CD4-positive, alpha-beta T cell (primary cell): ENCODE measurements at regions of chr2 and their contacts with region 1.

Region 1: GRCh38 chr2:196277002-196277401 is 105.6 kb upstream of the STK17B start:
- DNase-seq: peak in 7 of 14 experiments; percentile 9 to 79 (median 46)
- ATAC-seq: peak; percentile 59
- H3K4me3 ChIP-seq: no peak overlapping the region
- H3K4me3 Mint-ChIP-seq: peak overlapping the region; percentile 11
- H3K27ac ChIP-seq: no peak overlapping the region
- H3K27ac Mint-ChIP-seq: peak overlapping the region; percentile 79
- H3K4me1 ChIP-seq: peaks cover 25% of the 10 kb centered on the region
- H3K4me1 Mint-ChIP-seq: peaks cover 70% of the 10 kb centered on the region
- H3K27me3 ChIP-seq: no peaks in the 10 kb centered on the region
- H3K27me3 Mint-ChIP-seq: no peaks in the 10 kb centered on the region
- CTCF ChIP-seq: peak; percentile 81

Region 2: DNA sequence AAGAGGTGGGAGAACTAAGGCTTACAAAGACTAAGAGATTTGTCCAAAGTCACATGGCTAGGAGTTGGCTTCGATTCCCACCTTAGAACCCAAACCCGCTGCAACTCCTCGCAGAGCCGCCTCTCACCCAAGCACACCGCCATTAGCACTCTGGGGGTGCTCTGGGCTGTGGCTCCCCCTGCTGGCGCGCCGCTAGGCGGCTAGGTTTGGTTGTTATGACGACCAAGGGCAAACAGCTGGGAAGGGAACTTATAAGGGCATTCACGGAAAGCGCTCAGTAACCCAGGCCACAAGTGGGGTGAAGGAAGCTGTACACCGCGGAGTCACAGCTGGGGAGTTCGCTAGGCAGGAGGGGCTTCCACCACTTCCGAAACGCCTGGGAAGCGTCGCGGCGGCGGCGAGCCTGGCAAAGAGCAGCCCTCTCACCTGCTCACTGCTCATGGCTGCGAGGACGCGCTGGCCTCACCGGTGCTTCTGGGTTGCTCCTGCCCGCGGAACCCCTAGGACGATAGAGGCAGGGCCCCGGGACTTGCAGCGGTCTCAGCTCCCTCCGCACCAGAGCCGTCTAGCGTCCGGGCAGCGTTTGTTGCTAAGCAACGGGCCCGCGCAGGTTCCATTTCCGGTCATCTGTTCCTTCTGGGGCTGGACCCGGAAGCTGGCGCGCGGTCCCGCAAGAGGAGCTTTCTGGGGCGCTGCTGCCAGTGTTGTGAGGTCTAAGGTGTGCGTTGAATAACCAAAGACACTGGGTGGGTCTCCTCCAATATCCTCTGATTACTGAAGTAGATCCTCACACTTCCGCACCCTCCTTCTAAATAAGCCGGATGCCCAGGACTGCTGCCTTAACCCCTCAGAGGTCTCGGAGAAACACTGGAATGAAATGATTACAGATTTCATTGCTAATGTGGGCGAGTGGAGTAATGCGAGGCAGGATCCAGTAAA is 208.5 kb before region 1 on chr2 and contains the start of gene DNAH7:
- CTCF ChIA-PET with region 1: interaction called, 18 read pairs
- POLR2A ChIA-PET with region 1: interaction called, 4 read pairs
- intact Hi-C with region 1: no loop called
- DNase-seq: peak; percentile 81 to 97 (median 91)
- ATAC-seq: peak; percentile 96
- H3K4me3 ChIP-seq: peak within 1 kb of the TSS; percentile 69
- H3K4me3 Mint-ChIP-seq: peak within 1 kb of the TSS; percentile 86
- H3K27ac ChIP-seq: peak within 1 kb of the TSS in 1 of 2 donors; percentile 40
- H3K27ac Mint-ChIP-seq: peak within 1 kb of the TSS; percentile 47
- H3K4me1 ChIP-seq: peaks cover 13% of the 10 kb centered on the region
- H3K4me1 Mint-ChIP-seq: peaks cover 19% of the 10 kb centered on the region
- H3K27me3 ChIP-seq: no peaks in the 10 kb centered on the region
- H3K27me3 Mint-ChIP-seq: peaks cover under 1% of the 10 kb centered on the region
- CTCF ChIP-seq: peak; percentile 94
- total RNA-seq, gene DNAH7: not detected

Region 3: DNA sequence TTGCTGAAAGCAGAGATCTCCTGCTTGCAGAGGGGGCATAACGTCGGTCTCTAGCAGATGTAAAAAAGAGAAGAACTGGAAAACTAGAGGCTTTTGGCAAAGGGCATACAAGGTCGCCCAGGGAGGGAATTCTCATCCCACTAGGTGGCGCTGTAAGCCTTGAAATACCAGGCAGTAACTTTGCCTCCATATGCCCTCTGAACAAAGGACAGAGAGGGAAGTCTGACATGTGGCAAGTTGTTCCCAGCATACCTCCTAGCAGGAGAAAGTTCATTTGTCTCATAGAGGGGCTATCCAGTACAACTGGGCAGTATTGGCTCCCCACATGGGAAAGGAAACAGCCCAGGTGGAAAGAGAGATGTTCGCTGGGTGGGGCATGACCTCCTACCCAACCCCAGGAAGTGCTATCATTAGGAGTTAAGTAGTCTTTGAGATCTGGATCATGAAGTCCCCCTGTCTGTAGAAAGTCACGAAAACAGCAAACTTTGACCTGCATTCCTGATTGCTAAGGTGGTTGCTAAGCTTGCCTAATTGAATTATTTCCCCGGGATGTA is 145.5 kb before region 1 on chr2:
- CTCF ChIA-PET with region 1: interaction called, 3 read pairs
- POLR2A ChIA-PET with region 1: interaction called, 5 read pairs
- intact Hi-C with region 1: loop called in 1 of 2 experiments (anchors 5 kb)
- DNase-seq: peak in 12 of 14 experiments; percentile 33 to 81 (median 50)
- ATAC-seq: peak; percentile 28
- H3K4me3 ChIP-seq: no peak overlapping the region
- H3K4me3 Mint-ChIP-seq: peak overlapping the region; percentile 3
- H3K27ac ChIP-seq: peak overlapping the region in 1 of 2 donors; percentile 27
- H3K27ac Mint-ChIP-seq: peak overlapping the region; percentile 77
- H3K4me1 ChIP-seq: peaks cover 8% of the 10 kb centered on the region
- H3K4me1 Mint-ChIP-seq: peaks cover 23% of the 10 kb centered on the region
- H3K27me3 ChIP-seq: no peaks in the 10 kb centered on the region
- H3K27me3 Mint-ChIP-seq: no peaks in the 10 kb centered on the region
- CTCF ChIP-seq: peak; percentile 55

Region 4: DNA sequence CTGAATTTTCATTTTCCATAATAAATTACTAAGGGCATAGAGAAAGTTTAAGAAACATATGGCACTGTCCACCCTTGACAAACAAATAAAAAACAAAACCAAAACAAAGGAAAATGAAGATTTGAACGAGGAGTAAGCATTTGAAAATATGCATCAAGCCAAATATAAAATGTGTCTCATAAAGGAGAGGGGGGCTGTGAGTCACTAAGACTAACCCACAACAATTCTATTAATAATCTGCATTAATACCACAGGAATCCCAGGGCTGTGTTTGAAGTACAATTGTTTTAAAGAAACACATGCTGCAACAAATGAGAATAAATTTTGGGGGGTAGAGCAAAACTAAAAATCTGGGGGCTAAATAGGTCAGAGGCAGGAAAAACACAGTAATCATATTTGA is 51.8 kb before region 1 on chr2:
- CTCF ChIA-PET with region 1: interaction called, 11 read pairs
- POLR2A ChIA-PET with region 1: interaction called, 22 read pairs
- intact Hi-C with region 1: loop called in 1 of 2 experiments (anchors 5 kb)
- DNase-seq: no peak
- ATAC-seq: no peak
- H3K4me3 ChIP-seq: no peak overlapping the region
- H3K4me3 Mint-ChIP-seq: peak overlapping the region; percentile 7
- H3K27ac ChIP-seq: no peak overlapping the region
- H3K27ac Mint-ChIP-seq: peak overlapping the region; percentile 46
- H3K4me1 ChIP-seq: peaks cover 30% of the 10 kb centered on the region
- H3K4me1 Mint-ChIP-seq: peaks cover 89% of the 10 kb centered on the region
- H3K27me3 ChIP-seq: no peaks in the 10 kb centered on the region
- H3K27me3 Mint-ChIP-seq: no peaks in the 10 kb centered on the region
- CTCF ChIP-seq: no peak

Region 5: GRCh38 chr2:196239622-196240587 is 37.1 kb before region 1 on chr2:
- CTCF ChIA-PET with region 1: interaction called, 8 read pairs
- POLR2A ChIA-PET with region 1: interaction called, 22 read pairs
- intact Hi-C with region 1: loop called (anchors 1 to 2 kb)
- DNase-seq: peak; percentile 57 to 95 (median 73)
- ATAC-seq: peak; percentile 80
- H3K4me3 ChIP-seq: peak overlapping the region; percentile 13
- H3K4me3 Mint-ChIP-seq: peak overlapping the region; percentile 83
- H3K27ac ChIP-seq: peak overlapping the region; percentile 54 to 76
- H3K27ac Mint-ChIP-seq: peak overlapping the region; percentile 95
- H3K4me1 ChIP-seq: peaks cover 57% of the 10 kb centered on the region
- H3K4me1 Mint-ChIP-seq: peaks cover 79% of the 10 kb centered on the region
- H3K27me3 ChIP-seq: no peaks in the 10 kb centered on the region
- H3K27me3 Mint-ChIP-seq: no peaks in the 10 kb centered on the region
- CTCF ChIP-seq: no peak